Activated CD8-positive, alpha-beta T cell treated with anti-CD3 and anti-CD28 coated beads for 36 hours (primary cell): ENCODE measurements at regions of chr1 and their contacts with region 1.

Region 1: DNA sequence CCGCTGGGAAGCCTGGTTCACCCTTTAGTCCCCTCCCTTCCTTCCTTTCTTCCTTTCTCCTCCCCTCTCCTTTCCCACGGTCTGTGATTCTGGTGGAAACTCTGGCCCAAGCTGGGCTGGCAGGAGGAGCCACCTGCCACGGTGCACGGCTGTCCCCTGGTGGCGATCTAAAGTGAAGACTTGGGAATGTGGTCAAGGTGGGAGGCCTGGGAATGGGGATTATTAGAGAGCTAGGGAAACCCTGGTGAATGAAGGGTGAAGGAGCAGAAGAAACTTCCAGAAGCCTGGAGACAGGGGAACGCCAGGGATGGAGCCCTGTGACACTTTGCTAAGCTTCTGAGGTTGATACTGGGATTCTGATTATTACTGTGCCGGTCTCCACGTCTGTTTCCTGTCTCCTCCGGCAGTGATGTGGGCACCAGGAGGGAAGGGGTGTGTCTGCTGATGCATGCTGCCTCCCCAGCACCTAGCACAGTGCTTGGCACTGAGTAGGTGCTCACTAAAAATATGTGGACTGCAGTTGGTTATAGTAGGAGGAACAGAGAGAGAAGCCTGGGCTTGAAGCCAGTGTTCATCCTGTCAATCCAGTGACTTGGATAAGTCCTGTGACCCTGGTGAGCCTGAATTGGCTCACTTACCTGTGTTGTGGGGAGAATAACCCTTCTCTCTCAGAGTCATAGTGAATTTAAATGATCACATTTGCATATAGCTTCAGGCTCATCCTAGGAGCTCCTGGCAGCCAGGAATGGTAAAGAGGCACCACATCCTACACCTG is 71.2 kb upstream of the NBPF3 start:
- DNase-seq: peak; percentile 57
- ATAC-seq: peak; percentile 68
- H3K4me3 Mint-ChIP-seq: no peak overlapping the region
- H3K27ac Mint-ChIP-seq: no peak overlapping the region
- H3K4me1 Mint-ChIP-seq: peaks cover 8% of the 10 kb centered on the region
- H3K27me3 Mint-ChIP-seq: no peaks in the 10 kb centered on the region
- CTCF ChIP-seq: peak; percentile 99

Region 2: GRCh38 chr1:21162740-21163464 is 205.8 kb before region 1 on chr1:
- CTCF ChIA-PET with region 1: no interaction called
- POLR2A ChIA-PET with region 1: no interaction called
- intact Hi-C with region 1: no loop called
- DNase-seq: no peak
- ATAC-seq: no peak
- H3K4me3 Mint-ChIP-seq: no peak overlapping the region
- H3K27ac Mint-ChIP-seq: no peak overlapping the region
- H3K4me1 Mint-ChIP-seq: peaks cover 17% of the 10 kb centered on the region
- H3K27me3 Mint-ChIP-seq: no peaks in the 10 kb centered on the region
- CTCF ChIP-seq: no peak

Region 3: GRCh38 chr1:21225065-21225464 is 143.6 kb before region 1 on chr1:
- CTCF ChIA-PET with region 1: interaction called, 13 read pairs
- POLR2A ChIA-PET with region 1: no interaction called
- intact Hi-C with region 1: loop called (anchors 5 kb)
- DNase-seq: no peak
- ATAC-seq: no peak
- H3K4me3 Mint-ChIP-seq: no peak overlapping the region
- H3K27ac Mint-ChIP-seq: no peak overlapping the region
- H3K4me1 Mint-ChIP-seq: no peaks in the 10 kb centered on the region
- H3K27me3 Mint-ChIP-seq: no peaks in the 10 kb centered on the region
- CTCF ChIP-seq: no peak

Region 4: DNA sequence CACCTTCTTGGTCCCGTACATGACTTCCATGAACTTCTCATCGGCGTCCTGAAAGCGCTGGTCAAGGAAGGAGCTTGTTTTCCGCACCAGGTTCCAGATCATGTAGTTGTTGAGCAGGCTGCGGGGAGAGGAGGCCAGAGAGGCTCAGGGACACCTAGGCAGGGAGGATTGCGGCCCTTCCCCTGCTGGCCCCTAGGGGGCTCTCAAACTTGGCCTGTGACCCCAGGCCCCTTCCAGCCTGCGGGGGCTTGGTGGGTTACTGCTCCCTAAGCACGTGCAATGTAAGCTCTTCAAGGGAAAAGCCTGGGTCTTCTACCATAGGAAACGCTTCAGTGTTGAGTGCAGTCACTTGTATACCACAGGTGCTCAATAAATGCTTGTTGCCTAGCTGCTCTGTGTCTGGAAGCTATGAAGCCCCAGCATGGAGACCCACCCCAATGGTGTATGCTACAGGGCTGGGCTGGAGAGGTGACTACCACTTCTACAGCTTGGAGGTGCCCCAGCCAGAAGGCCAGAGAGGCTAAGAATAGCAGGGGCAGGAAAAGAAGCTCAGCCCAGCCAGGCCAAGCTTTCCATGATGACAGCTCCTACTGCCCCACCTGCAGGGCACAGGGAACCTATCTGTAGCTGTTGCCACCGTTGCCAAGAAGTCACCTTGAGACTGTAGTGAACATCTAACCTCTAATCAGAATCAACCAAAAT is 123.6 kb before region 1 on chr1:
- CTCF ChIA-PET with region 1: interaction called, 13 read pairs
- POLR2A ChIA-PET with region 1: no interaction called
- intact Hi-C with region 1: no loop called
- DNase-seq: no peak
- ATAC-seq: no peak
- H3K4me3 Mint-ChIP-seq: no peak overlapping the region
- H3K27ac Mint-ChIP-seq: no peak overlapping the region
- H3K4me1 Mint-ChIP-seq: peaks cover 2% of the 10 kb centered on the region
- H3K27me3 Mint-ChIP-seq: no peaks in the 10 kb centered on the region
- CTCF ChIP-seq: peak; percentile 43

Region 5: DNA sequence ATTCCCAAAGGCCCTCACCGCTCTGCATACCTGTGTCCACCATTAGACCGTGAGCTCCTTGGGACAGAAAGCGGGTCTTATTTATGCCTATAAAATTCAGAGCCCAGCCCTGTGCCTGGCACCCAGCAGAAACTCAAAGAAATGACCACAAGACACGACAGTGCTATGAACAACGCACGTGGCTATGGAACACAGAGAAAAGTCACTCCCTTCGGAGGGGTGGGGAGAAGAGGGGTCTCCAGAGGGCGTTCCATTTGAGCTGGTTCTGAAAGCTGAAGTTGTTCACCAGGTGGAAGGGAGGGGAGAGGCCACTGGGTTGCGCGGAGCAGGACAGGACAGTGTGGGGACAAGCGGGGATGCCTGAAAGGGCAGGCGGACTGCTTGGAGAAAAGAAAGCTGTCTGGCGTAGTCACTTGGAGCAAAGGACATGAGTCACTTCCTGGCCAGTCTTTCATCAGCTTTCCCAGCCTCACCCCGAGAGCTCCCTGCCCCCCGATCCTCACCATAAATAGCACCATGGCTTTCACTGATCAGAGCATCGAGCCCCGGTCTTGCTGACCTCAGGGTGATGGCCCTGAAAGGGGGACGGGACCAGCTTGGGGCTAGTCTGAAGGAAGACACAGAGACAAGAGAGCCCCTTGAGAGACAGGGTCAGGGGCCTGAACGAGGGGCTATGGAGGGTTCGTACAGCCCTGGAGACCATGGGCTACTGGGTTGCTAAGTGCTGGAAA is 107.0 kb before region 1 on chr1:
- CTCF ChIA-PET with region 1: interaction called, 187 read pairs
- POLR2A ChIA-PET with region 1: no interaction called
- intact Hi-C with region 1: no loop called
- DNase-seq: peak; percentile 58
- ATAC-seq: peak; percentile 43
- H3K4me3 Mint-ChIP-seq: no peak overlapping the region
- H3K27ac Mint-ChIP-seq: peak overlapping the region; percentile 80
- H3K4me1 Mint-ChIP-seq: peaks cover 65% of the 10 kb centered on the region
- H3K27me3 Mint-ChIP-seq: no peaks in the 10 kb centered on the region
- CTCF ChIP-seq: no peak

Region 6: DNA sequence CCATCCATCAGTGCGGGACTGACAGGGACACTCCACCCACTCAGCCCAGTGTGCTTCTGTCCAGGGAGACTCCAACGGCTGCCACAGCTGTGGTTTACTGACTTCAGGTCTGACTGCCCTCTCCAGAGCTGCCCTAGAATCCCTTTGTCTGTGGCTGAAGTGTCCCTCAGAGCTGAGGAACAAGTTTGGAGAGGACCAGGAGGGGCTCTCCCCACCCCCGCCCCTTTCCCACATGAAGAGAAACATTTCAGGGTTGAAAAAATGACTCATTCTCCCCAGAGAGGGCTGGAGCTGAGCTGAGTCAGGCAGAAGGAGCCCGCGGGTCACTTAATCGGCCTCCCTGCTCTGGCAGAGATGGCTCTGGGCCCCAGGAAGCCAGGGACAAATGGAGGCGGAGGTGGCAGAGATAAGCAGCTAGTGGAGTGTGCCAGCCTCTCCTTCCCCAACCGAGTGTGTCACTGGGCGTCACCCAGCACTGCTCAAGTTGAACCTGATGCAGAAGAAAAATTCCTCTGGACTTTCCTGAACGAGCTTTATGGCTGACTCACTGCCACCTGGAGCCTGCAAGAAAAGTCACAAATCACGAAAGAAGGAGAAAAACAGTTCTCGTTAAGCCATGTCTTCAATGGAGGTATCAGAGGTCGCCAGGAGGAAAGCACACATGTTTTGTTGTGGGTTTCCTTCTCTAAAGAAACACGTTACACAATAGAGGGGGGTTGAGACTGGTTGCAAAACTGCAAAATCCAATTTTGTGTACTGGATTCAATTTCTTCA is 44.1 kb before region 1 on chr1:
- CTCF ChIA-PET with region 1: interaction called, 10 read pairs
- POLR2A ChIA-PET with region 1: interaction called, 4 read pairs
- intact Hi-C with region 1: no loop called
- DNase-seq: peak; percentile 91
- ATAC-seq: peak; percentile 86
- H3K4me3 Mint-ChIP-seq: peak overlapping the region; percentile 56
- H3K27ac Mint-ChIP-seq: peak overlapping the region; percentile 94
- H3K4me1 Mint-ChIP-seq: peaks cover 84% of the 10 kb centered on the region
- H3K27me3 Mint-ChIP-seq: no peaks in the 10 kb centered on the region
- CTCF ChIP-seq: no peak

Region 7: DNA sequence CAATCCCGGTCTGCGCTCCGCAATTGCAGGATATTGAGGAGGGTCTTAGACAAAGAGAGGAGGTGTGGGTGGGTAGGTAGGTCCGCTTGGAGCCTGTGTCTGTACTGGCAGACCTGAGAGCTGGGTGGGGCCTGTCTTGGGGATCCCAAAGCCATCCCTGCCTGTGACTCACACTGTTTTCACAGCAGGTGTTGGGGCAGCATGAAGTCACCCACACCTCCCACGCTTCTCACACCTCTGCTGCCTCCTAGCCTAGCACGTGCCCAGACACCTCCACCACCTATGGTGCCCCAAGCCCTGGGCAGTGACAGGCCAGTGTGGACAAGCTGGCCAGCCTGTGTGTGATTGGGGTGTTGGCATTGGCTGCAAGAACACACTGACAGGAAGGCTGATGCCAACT is 12.7 kb before region 1 on chr1:
- CTCF ChIA-PET with region 1: interaction called, 10 read pairs
- POLR2A ChIA-PET with region 1: interaction called, 3 read pairs
- intact Hi-C with region 1: no loop called
- DNase-seq: peak; percentile 56
- ATAC-seq: peak; percentile 91
- H3K4me3 Mint-ChIP-seq: no peak overlapping the region
- H3K27ac Mint-ChIP-seq: no peak overlapping the region
- H3K4me1 Mint-ChIP-seq: peaks cover 9% of the 10 kb centered on the region
- H3K27me3 Mint-ChIP-seq: no peaks in the 10 kb centered on the region
- CTCF ChIP-seq: no peak

Region 8: GRCh38 chr1:21391493-21391892 is 22.8 kb after region 1 on chr1:
- CTCF ChIA-PET with region 1: no interaction called
- POLR2A ChIA-PET with region 1: no interaction called
- intact Hi-C with region 1: no loop called
- DNase-seq: no peak
- ATAC-seq: no peak
- H3K4me3 Mint-ChIP-seq: no peak overlapping the region
- H3K27ac Mint-ChIP-seq: no peak overlapping the region
- H3K4me1 Mint-ChIP-seq: peaks cover 7% of the 10 kb centered on the region
- H3K27me3 Mint-ChIP-seq: peaks cover 11% of the 10 kb centered on the region
- CTCF ChIP-seq: no peak

Region 9: GRCh38 chr1:21490774-21491553 is 122.3 kb after region 1 on chr1:
- CTCF ChIA-PET with region 1: interaction called, 19 read pairs
- POLR2A ChIA-PET with region 1: no interaction called
- intact Hi-C with region 1: no loop called
- DNase-seq: peak; percentile 57
- ATAC-seq: peak; percentile 69
- H3K4me3 Mint-ChIP-seq: no peak overlapping the region
- H3K27ac Mint-ChIP-seq: no peak overlapping the region
- H3K4me1 Mint-ChIP-seq: peaks cover 7% of the 10 kb centered on the region
- H3K27me3 Mint-ChIP-seq: peaks cover 8% of the 10 kb centered on the region
- CTCF ChIP-seq: peak; percentile 56

Region 10: DNA sequence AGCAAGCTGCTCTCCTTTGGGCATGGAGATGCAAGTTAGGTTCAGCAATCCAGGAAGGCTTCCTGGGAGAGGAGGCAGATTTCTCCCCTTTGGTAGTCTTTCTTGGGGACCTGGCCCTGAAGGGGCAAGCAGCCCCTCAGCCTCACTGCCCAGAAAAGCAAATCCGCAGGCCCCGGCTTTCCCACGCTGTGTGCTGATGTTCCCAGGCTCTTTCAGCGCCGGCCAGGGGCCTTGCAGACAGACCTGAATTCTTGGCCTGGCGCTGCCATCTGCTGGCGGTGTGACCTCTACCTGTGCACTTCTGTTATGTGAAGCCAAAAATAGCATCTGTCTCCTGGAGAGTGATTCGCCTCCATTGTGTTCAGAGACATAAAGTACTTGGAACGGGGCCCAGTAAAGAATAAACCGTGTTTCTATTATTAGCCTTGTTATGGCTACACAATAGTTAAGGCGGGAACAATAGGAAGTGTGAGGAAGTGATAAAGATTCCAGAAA is 205.3 kb after region 1 on chr1:
- CTCF ChIA-PET with region 1: no interaction called
- POLR2A ChIA-PET with region 1: no interaction called
- intact Hi-C with region 1: no loop called
- DNase-seq: peak; percentile 62
- ATAC-seq: no peak
- H3K4me3 Mint-ChIP-seq: no peak overlapping the region
- H3K27ac Mint-ChIP-seq: no peak overlapping the region
- H3K4me1 Mint-ChIP-seq: no peaks in the 10 kb centered on the region
- H3K27me3 Mint-ChIP-seq: peaks cover 10% of the 10 kb centered on the region
- CTCF ChIP-seq: no peak